Activated T-helper 2 cell treated with anti-CD3 and anti-CD28 coated beads, Interferon-gamma antibody, Interleukin-2, Interleukin-4, amounts not matched to agents 10 μg/mL and 5 μg/mL and 100 μg/mL, durations not matched to agents 14 hours and 24 hours and 36 hours (primary cell): ENCODE measurements at regions of chr17 and their contacts with region 1.

Region 1: GRCh38 chr17:44210342-44211192 is 8.9 kb downstream of the UBTF start:
- DNase-seq: peak; percentile 91
- H3K4me3 Mint-ChIP-seq: peak overlapping the region; percentile 75
- H3K27ac Mint-ChIP-seq: peak overlapping the region; percentile 88
- H3K4me1 Mint-ChIP-seq: peaks cover 23% of the 10 kb centered on the region
- H3K27me3 Mint-ChIP-seq: no peaks in the 10 kb centered on the region

Region 2: DNA sequence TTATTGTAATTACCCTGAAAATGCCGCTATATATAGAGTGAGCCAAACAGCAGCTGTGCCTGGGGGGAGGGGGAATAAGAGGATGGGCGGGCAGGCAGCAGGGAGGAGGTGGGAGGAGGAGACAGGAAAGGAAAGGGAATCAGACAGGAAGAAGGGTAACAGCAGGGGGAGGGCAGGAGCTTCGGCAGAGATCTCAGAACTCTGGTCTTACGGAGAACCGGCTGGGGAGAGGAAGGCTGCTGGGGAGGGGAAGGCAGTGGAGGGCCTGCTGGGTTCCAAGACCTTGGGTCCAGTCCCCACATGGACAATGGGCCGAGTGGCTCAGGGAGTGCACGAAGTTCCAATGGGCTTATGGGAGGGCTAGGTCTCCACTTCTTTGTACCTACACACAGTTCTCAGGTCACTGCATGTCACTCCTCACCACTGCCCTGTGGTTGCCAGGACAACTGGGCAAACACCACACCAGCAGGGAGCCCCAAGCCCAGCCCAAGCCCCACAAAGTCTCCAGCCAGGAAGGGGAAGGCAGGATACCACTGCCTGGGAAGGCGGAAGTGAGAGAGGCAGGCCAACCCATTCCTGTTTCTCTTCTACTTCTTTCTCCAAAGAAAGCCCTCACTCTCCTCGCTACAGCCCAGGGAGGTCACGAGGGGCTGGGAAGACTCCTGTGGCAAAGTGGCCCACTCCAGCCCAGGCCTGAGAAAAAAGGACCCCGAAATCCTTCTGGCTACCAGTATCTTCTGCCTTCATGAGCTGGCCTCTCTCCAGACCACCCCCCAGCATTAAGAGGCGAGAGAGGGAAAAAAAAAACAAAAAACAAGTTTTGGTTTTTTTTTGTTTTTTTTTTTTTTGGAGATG is 114.7 kb before region 1 on chr17:
- intact Hi-C with region 1: no loop called
- DNase-seq: no peak
- H3K4me3 Mint-ChIP-seq: no peak overlapping the region
- H3K27ac Mint-ChIP-seq: no peak overlapping the region
- H3K4me1 Mint-ChIP-seq: peaks cover 6% of the 10 kb centered on the region
- H3K27me3 Mint-ChIP-seq: no peaks in the 10 kb centered on the region

Region 3: DNA sequence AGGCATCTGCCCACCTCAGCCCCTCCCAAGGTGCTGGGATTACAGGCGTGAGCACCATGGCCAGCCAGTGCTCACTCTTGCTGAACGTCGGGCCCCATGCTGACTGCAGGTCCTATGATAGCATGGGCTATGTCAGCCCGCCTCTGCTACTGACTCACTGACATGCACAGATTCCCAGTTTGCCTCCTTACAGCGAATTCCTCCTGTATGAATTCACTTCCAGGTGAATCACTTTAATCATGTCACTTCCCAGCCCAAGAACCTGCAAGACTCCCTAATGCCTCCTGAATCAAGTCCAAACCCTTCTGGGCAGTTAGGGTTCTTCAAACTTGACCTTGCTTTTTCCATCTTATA is 25.0 kb after region 1 on chr17:
- intact Hi-C with region 1: no loop called
- DNase-seq: no peak
- H3K4me3 Mint-ChIP-seq: no peak overlapping the region
- H3K27ac Mint-ChIP-seq: no peak overlapping the region
- H3K4me1 Mint-ChIP-seq: peaks cover 4% of the 10 kb centered on the region
- H3K27me3 Mint-ChIP-seq: peaks cover 5% of the 10 kb centered on the region

Region 4: GRCh38 chr17:44331249-44331760 is 120.7 kb after region 1 on chr17:
- intact Hi-C with region 1: loop called (anchors 1 kb)
- DNase-seq: peak; percentile 69
- H3K4me3 Mint-ChIP-seq: no peak overlapping the region
- H3K27ac Mint-ChIP-seq: no peak overlapping the region
- H3K4me1 Mint-ChIP-seq: peaks cover 7% of the 10 kb centered on the region
- H3K27me3 Mint-ChIP-seq: peaks cover 1% of the 10 kb centered on the region